T-cell (primary cell): ENCODE measurements at regions of chr6 and their contacts with region 1.

Region 1: DNA sequence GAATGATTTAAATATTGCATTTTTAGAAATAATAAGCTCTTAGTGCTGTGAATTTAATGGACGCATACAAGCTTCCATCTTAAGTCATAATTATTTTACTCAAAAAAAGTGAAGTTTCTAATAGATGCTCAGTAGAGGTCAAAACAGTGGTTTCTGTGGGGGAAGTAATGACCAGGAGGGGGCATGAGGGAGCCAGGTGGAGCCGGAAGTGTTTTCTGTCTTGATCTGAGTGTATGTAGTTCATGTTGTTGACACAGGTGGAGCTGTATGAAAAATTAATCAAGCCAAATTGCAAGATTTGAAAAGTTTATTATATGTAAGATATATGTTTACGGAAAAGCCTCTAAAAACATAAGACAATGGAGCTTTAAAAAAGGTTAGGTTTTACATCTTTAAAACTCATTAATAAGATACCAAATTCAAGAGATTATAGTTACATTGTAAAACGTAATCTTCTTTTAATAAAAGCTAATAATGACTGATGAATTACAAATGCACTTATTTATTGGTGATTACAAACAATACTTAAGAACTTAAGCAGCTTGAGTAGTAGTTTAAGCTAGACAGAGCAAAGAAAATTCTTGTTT is 68.0 kb downstream of the PLAGL1 start:
- DNase-seq: peak; percentile 11 to 74 (median 45)
- ATAC-seq: peak; percentile 83 to 95 (median 89)
- H3K4me3 ChIP-seq: no peak overlapping the region
- H3K4me3 Mint-ChIP-seq: no peak overlapping the region
- H3K27ac ChIP-seq: no peak overlapping the region
- H3K27ac Mint-ChIP-seq: no peak overlapping the region
- H3K4me1 ChIP-seq: peaks cover 0 to 8% of the 10 kb centered on the region in 2 experiments
- H3K4me1 Mint-ChIP-seq: peaks cover 8 to 11% (median 10%) of the 10 kb centered on the region in 3 donors
- H3K27me3 ChIP-seq: peaks cover 0 to 2% of the 10 kb centered on the region in 2 experiments
- H3K27me3 Mint-ChIP-seq: no peaks in the 10 kb centered on the region

Region 2: GRCh38 chr6:143928853-143929252 is 11.3 kb before region 1 on chr6:
- CTCF ChIA-PET with region 1: interaction called, 9 to 12 read pairs
- POLR2A ChIA-PET with region 1: no interaction called
- DNase-seq: no peak
- ATAC-seq: no peak
- H3K4me3 ChIP-seq: no peak overlapping the region
- H3K4me3 Mint-ChIP-seq: no peak overlapping the region
- H3K27ac ChIP-seq: no peak overlapping the region
- H3K27ac Mint-ChIP-seq: no peak overlapping the region
- H3K4me1 ChIP-seq: no peaks in the 10 kb centered on the region
- H3K4me1 Mint-ChIP-seq: no peaks in the 10 kb centered on the region
- H3K27me3 ChIP-seq: peaks cover 0 to 2% of the 10 kb centered on the region in 2 experiments
- H3K27me3 Mint-ChIP-seq: peaks cover 7 to 8% of the 10 kb centered on the region in 2 donors

Region 3: GRCh38 chr6:143970456-143971218 is 30.5 kb after region 1 on chr6:
- CTCF ChIA-PET with region 1: no interaction called
- POLR2A ChIA-PET with region 1: no interaction called
- DNase-seq: no peak
- ATAC-seq: no peak
- H3K4me3 ChIP-seq: no peak overlapping the region
- H3K4me3 Mint-ChIP-seq: no peak overlapping the region
- H3K27ac ChIP-seq: no peak overlapping the region
- H3K27ac Mint-ChIP-seq: no peak overlapping the region
- H3K4me1 ChIP-seq: no peaks in the 10 kb centered on the region
- H3K4me1 Mint-ChIP-seq: no peaks in the 10 kb centered on the region
- H3K27me3 ChIP-seq: no peaks in the 10 kb centered on the region
- H3K27me3 Mint-ChIP-seq: no peaks in the 10 kb centered on the region

Region 4: GRCh38 chr6:144013486-144013909 is 73.4 kb after region 1 on chr6:
- CTCF ChIA-PET with region 1: interaction called, 7 to 18 read pairs
- POLR2A ChIA-PET with region 1: no interaction called
- DNase-seq: peak in 33 of 35 experiments; percentile 12 to 80 (median 47)
- ATAC-seq: no peak
- H3K4me3 ChIP-seq: no peak overlapping the region
- H3K4me3 Mint-ChIP-seq: no peak overlapping the region
- H3K27ac ChIP-seq: no peak overlapping the region
- H3K27ac Mint-ChIP-seq: no peak overlapping the region
- H3K4me1 ChIP-seq: peaks cover 0 to 2% of the 10 kb centered on the region in 2 experiments
- H3K4me1 Mint-ChIP-seq: peaks cover 0 to 6% (median 0%) of the 10 kb centered on the region in 3 donors
- H3K27me3 ChIP-seq: peaks cover 0 to 2% of the 10 kb centered on the region in 2 experiments
- H3K27me3 Mint-ChIP-seq: peaks cover 8 to 16% of the 10 kb centered on the region in 2 donors

Region 5: GRCh38 chr6:144087789-144088426 is 147.8 kb after region 1 on chr6:
- CTCF ChIA-PET with region 1: interaction called, 3 to 11 read pairs
- POLR2A ChIA-PET with region 1: no interaction called
- DNase-seq: no peak
- ATAC-seq: no peak
- H3K4me3 ChIP-seq: no peak overlapping the region
- H3K4me3 Mint-ChIP-seq: no peak overlapping the region
- H3K27ac ChIP-seq: no peak overlapping the region
- H3K27ac Mint-ChIP-seq: no peak overlapping the region
- H3K4me1 ChIP-seq: no peaks in the 10 kb centered on the region
- H3K4me1 Mint-ChIP-seq: peaks cover 0 to 1% (median 0%) of the 10 kb centered on the region in 3 donors
- H3K27me3 ChIP-seq: no peaks in the 10 kb centered on the region
- H3K27me3 Mint-ChIP-seq: no peaks in the 10 kb centered on the region